Activated T-helper 2 cell treated with anti-CD3 and anti-CD28 coated beads, Interferon-gamma antibody, Interleukin-2, Interleukin-4, amounts not matched to agents 10 μg/mL and 5 μg/mL and 100 μg/mL, durations not matched to agents 14 hours and 24 hours and 36 hours (primary cell): ENCODE measurements at regions of chr2 and their contacts with region 1.

Region 1: DNA sequence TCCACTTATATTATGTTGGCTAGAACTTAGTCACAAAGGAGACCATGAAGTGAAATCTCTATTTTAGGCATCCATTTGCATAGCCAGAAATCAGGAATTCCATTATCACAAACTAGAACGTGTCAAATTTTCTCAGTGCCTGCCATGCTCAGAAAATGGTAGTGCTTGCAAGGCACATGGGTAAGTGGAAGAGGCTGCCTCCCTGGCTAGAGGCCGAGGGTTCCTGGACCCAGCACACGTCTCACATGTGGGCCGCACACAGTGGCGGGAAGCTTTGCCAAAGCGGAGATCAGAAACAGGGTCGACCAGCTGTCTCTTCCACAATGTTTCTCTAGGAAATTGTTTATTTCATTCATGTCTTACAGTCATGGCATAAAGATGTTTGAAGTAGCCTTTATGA is 42.3 kb downstream of the TRAF3IP1 start:
- DNase-seq: no peak
- H3K4me3 Mint-ChIP-seq: no peak overlapping the region
- H3K27ac Mint-ChIP-seq: no peak overlapping the region
- H3K4me1 Mint-ChIP-seq: peaks cover 17% of the 10 kb centered on the region
- H3K27me3 Mint-ChIP-seq: no peaks in the 10 kb centered on the region

Region 2: GRCh38 chr2:238339395-238340213 is 23.0 kb before region 1 on chr2:
- intact Hi-C with region 1: no loop called
- DNase-seq: no peak
- H3K4me3 Mint-ChIP-seq: no peak overlapping the region
- H3K27ac Mint-ChIP-seq: no peak overlapping the region
- H3K4me1 Mint-ChIP-seq: no peaks in the 10 kb centered on the region
- H3K27me3 Mint-ChIP-seq: no peaks in the 10 kb centered on the region

Region 3: GRCh38 chr2:238376884-238377391 is 14.3 kb after region 1 on chr2:
- intact Hi-C with region 1: no loop called
- DNase-seq: no peak
- H3K4me3 Mint-ChIP-seq: no peak overlapping the region
- H3K27ac Mint-ChIP-seq: no peak overlapping the region
- H3K4me1 Mint-ChIP-seq: peaks cover 34% of the 10 kb centered on the region
- H3K27me3 Mint-ChIP-seq: peaks cover 3% of the 10 kb centered on the region

Region 4: DNA sequence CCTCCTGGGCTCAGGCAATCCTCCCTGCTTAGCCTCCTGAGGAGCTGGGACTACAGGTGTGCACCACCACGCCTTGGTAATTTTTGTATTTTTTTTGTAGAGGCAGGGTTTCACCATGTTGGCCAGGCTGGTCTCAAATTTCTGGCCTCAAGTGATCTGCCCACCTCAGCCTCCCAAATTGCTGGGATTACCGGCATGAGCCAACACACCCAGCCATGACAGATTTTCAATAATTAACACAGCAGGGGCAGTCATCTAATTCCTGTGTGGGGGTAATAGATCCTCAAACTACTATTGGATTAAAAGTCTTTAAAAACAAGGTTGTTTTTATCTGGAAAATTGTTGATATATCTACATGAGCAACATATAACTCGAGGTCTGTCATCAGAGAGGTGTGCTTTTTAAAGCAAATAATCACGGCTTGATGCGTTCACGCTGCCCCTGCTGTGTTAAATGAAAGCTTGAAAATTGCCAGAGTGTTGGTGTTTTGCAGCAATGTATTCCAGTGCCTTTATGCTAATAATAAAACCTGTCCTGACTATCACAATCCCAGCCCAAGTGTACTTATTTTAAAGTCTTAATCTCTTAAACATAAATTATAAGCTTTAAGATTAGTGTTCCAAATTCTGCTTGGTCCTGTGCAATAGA is 28.5 kb after region 1 on chr2:
- intact Hi-C with region 1: no loop called
- DNase-seq: no peak
- H3K4me3 Mint-ChIP-seq: no peak overlapping the region
- H3K27ac Mint-ChIP-seq: no peak overlapping the region
- H3K4me1 Mint-ChIP-seq: peaks cover 2% of the 10 kb centered on the region
- H3K27me3 Mint-ChIP-seq: peaks cover 2% of the 10 kb centered on the region

Region 5: DNA sequence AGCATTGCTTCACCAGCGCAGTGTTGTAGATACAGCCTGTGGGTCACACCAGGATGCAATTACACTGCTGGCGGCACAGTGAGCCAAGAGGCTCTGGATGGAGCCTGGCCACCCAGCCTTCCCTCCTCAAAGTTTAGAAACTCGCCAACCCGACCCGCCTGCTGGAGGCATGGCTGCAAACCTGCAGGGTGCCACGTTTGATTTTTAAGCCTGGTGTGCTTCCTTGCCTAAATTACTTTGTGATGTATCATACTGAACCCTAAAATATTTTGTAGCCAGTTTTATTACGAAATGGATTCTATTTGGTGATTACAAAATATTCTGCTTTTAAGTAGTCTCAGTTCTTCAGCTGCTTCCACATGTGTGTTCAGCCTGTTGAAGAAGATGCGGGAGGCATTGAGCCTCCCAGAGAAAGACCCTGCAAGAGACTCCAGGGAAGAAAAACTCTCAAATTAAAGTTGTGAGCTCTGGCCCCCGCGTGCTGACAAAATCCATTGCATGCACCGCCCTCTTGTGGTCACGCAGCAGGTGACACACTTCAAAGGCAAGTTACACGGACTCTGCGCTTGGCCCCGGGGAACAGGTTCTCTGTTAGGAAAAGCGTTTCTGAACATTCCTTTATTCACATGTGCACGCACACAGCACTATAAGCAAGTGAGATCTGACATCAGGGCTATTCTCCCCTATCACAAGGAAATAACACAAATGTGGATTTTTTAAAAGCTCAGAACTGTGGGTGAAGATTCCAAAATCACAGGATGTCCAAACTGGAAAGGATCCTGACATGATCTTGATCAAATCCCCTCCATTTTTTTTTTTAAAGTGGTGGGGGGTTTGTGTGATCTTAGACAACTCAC is 422.3 kb after region 1 on chr2:
- intact Hi-C with region 1: loop called (anchors 5 kb)
- DNase-seq: peak; percentile 20
- H3K4me3 Mint-ChIP-seq: no peak overlapping the region
- H3K27ac Mint-ChIP-seq: no peak overlapping the region
- H3K4me1 Mint-ChIP-seq: no peaks in the 10 kb centered on the region
- H3K27me3 Mint-ChIP-seq: peaks cover 6% of the 10 kb centered on the region